ENCODE measurements at regions of chr3 and their contacts with region 1.

Region 1: GRCh38 chr3:13657660-13658435 is 108.9 kb downstream of the FBLN2 start:
- DNase-seq: peak; percentile 50
- H3K4me3 ChIP-seq: no peak overlapping the region
- H3K27ac ChIP-seq: no peak overlapping the region
- H3K4me1 ChIP-seq: no peaks in the 10 kb centered on the region
- CTCF ChIP-seq: peak; percentile 78

Region 2: GRCh38 chr3:13884851-13885703 is 227.2 kb after region 1 on chr3:
- CTCF ChIA-PET with region 1: no interaction called
- POLR2A ChIA-PET with region 1: no interaction called
- intact Hi-C with region 1: loop called (anchors 1 kb)
- DNase-seq: peak; percentile 67
- H3K4me3 ChIP-seq: no peak overlapping the region
- H3K27ac ChIP-seq: no peak overlapping the region
- H3K4me1 ChIP-seq: no peaks in the 10 kb centered on the region
- CTCF ChIP-seq: peak; percentile 97

Measured in OCI-LY7 (cell line).